ENCODE measurements at regions of chr5 and their contacts with region 1.

Region 1: DNA sequence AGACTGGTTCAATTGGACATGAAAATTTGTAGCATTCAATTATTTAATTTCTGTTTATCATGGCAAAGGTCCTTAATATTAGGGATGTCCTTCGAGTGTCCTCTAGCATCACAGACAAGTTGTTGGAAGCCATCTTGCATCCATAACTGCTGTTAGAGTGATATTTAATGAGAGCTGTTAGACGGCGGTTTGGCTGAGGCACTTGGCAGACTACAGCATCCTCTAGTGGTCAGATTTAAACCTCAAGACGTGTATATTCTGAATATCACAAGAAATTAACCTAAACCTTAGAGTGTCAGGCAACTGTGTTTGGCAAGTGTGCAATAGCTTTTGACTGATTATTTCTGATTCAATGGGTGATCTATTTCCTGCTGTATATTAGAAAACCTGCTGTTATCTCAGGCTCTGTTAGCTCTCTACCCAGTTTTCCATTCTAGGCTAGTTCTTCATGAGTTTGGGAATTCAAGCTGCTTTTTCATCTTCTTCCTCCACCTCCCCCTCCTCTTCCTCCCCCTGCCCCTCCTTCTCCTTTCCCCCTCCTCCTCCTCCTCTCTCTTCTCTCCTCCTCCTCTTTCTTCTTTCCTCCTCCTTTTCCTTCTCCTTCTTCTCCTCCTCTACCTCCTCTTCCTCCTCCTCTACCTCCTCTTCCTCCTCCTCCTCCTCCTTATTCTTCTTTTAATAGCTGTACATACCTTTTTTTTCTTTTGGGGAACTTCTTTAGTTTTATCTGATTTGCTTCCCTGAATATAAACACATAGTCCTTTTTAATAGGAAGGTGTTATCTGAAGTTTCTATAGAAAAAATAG is 8.6 kb downstream of the SPINK1 start:
- DNase-seq: peak; percentile 29 to 83 (median 59)
- H3K4me3 ChIP-seq: no peak overlapping the region
- H3K27ac ChIP-seq: no peak overlapping the region
- H3K4me1 ChIP-seq: no peaks in the 10 kb centered on the region
- H3K27me3 ChIP-seq: no peaks in the 10 kb centered on the region
- CTCF ChIP-seq: peak; percentile 92 to 99 (median 99)
- POLR2A ChIP-seq: no peak

Region 2: GRCh38 chr5:147628058-147628895 is 194.6 kb before region 1 on chr5:
- intact Hi-C with region 1: loop called (anchors 2 to 5 kb)
- DNase-seq: peak; percentile 41 to 87 (median 73)
- H3K4me3 ChIP-seq: no peak overlapping the region
- H3K27ac ChIP-seq: no peak overlapping the region
- H3K4me1 ChIP-seq: no peaks in the 10 kb centered on the region
- H3K27me3 ChIP-seq: no peaks in the 10 kb centered on the region
- CTCF ChIP-seq: peak; percentile 62 to 94 (median 87)
- POLR2A ChIP-seq: no peak

Region 3: DNA sequence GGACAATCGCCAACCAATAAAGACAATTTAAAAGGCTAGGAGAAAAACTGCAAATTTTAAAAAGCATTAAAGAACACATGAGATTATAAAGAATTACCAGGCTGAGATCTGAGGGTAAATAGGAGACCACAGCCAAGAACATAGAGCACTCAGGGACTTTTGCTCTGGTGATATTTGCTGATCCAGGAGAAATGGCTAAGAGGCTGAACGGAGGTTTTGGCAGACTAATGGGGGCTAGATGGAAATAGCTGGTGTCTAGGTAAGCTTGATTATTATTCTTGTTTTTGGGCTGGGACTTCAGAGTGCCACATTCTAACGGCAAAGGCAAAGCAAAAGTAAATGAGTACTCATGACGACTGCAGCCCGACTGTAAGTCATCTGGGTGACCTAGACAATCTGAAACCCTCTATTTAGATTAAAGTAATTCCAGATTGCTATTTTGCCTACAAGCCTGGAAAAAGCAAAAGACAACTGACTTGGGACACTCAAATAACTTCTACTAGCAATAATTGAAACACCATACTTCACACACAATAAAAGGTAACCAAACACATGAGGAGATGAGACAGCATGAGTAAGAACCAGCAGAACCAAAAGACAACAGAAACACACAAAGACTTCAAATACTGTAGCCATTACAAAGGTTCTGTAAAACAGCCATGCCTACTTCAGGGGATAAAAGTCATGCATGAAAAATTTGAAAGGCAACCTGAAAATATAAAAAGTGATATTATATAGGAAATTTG is 109.2 kb before region 1 on chr5:
- intact Hi-C with region 1: no loop called
- DNase-seq: no peak
- H3K4me3 ChIP-seq: no peak overlapping the region
- H3K27ac ChIP-seq: no peak overlapping the region
- H3K4me1 ChIP-seq: no peaks in the 10 kb centered on the region
- H3K27me3 ChIP-seq: no peaks in the 10 kb centered on the region
- CTCF ChIP-seq: no peak
- POLR2A ChIP-seq: no peak

Region 4: GRCh38 chr5:147763791-147764525 is 58.9 kb before region 1 on chr5:
- intact Hi-C with region 1: no loop called
- DNase-seq: no peak
- H3K4me3 ChIP-seq: no peak overlapping the region
- H3K27ac ChIP-seq: no peak overlapping the region
- H3K4me1 ChIP-seq: no peaks in the 10 kb centered on the region
- H3K27me3 ChIP-seq: no peaks in the 10 kb centered on the region
- CTCF ChIP-seq: no peak
- POLR2A ChIP-seq: no peak